ENCODE measurements at regions of chr10 and their contacts with region 1.

Region 1: DNA sequence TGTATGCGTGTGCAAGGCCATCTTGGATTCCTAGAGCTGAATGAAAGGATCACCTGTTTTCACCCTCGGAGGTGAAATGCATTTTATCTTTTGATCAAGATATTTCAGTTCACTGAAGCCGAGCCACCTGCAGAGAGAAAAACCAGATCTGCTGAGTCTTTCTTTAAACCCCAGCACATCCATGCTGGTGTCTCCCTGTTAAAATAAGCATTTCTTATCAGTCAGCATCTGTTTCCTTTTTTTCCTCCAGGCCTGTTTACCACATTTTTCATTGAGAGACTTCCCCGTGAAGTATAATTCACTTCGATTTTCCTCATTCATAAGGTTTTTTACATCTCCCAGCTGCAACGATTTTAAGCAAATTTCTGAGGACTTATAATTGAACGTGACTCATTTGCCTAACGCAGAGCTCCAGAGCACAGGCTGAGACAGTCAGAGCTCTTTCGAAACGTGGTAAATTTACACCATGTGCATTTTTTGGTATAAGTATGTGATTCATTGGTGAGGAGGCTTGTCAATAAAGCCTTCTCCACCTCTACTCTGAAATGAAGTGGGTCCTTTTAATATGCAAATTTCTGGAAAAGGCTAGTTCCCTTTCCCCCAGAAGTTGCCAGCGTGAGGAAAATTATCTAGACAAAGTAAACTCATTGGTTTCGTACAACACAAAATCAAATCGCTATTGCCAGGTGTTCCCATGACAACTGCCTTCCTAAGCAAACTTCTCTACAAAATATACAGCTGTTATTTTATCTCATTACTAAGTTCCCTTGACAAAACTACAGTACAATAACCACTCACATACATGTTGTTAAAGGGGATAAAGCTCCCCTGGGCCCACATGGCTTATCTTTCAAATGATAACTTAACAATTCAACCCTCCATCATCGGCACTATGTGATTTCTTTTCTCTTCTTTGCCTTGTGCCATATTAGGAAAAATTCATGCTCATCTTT is 374.8 kb upstream of the AKR1E2 start:
- DNase-seq: peak; percentile 96
- H3K4me3 ChIP-seq: no peak overlapping the region
- H3K27ac ChIP-seq: peak overlapping the region; percentile 85
- H3K4me1 ChIP-seq: peaks cover 23% of the 10 kb centered on the region
- H3K27me3 ChIP-seq: no peaks in the 10 kb centered on the region
- CTCF ChIP-seq: no peak
- POLR2A ChIP-seq: no peak

Region 2: GRCh38 chr10:4372601-4373000 is 78.6 kb before region 1 on chr10:
- CTCF ChIA-PET with region 1: no interaction called
- POLR2A ChIA-PET with region 1: no interaction called
- dilution Hi-C with region 1: no loop called
- intact Hi-C with region 1: loop called (anchors 1 kb)
- DNase-seq: peak; percentile 93
- H3K4me3 ChIP-seq: no peak overlapping the region
- H3K27ac ChIP-seq: peak overlapping the region; percentile 91
- H3K4me1 ChIP-seq: peaks cover 14% of the 10 kb centered on the region
- H3K27me3 ChIP-seq: no peaks in the 10 kb centered on the region
- CTCF ChIP-seq: no peak
- POLR2A ChIP-seq: no peak

Region 3: GRCh38 chr10:4541292-4541691 is 90.1 kb after region 1 on chr10:
- CTCF ChIA-PET with region 1: no interaction called
- POLR2A ChIA-PET with region 1: no interaction called
- dilution Hi-C with region 1: no loop called
- intact Hi-C with region 1: no loop called
- DNase-seq: peak; percentile 94
- H3K4me3 ChIP-seq: no peak overlapping the region
- H3K27ac ChIP-seq: peak overlapping the region; percentile 93
- H3K4me1 ChIP-seq: peaks cover 10% of the 10 kb centered on the region
- H3K27me3 ChIP-seq: no peaks in the 10 kb centered on the region
- CTCF ChIP-seq: peak in 1 of 2 donors; percentile 18
- POLR2A ChIP-seq: no peak

Region 4: DNA sequence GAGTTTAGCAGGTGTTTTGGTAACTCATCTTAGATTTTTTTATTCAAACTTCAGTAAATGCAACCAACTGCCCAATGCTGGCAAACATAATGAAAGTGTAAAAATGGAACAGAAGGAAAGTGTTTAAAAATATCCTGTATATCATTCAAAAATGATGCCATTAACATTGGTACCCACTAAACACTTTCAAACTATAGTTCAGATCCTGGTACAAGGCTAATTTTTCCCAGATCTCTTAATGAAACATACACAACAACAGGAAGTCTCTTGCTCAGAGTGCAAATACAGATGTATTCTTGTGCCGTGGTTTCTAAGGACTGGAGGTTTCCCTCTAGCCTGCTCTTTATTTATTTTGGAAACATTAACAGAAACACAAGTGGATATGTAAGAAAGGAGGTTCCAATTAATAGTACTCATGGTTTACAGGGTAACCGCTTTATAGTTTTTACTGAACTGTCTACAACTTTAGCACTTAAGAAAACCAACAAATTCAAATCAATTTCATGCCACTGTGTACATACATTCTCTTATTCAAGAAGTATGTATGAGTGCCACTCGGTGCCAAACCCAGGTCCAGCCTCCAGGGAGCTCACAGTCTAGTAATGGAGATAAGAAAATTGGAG is 198.8 kb after region 1 on chr10:
- CTCF ChIA-PET with region 1: no interaction called
- POLR2A ChIA-PET with region 1: no interaction called
- dilution Hi-C with region 1: no loop called
- intact Hi-C with region 1: loop called (anchors 5 kb)
- DNase-seq: peak; percentile 92
- H3K4me3 ChIP-seq: no peak overlapping the region
- H3K27ac ChIP-seq: peak overlapping the region; percentile 4
- H3K4me1 ChIP-seq: peaks cover 35% of the 10 kb centered on the region
- H3K27me3 ChIP-seq: no peaks in the 10 kb centered on the region
- CTCF ChIP-seq: no peak
- POLR2A ChIP-seq: no peak

Measured in endothelial cell of umbilical vein (primary cell).